Kidney (tissue), 22 donors: ENCODE measurements at regions of chr19 and their contacts with region 1.

Region 1: DNA sequence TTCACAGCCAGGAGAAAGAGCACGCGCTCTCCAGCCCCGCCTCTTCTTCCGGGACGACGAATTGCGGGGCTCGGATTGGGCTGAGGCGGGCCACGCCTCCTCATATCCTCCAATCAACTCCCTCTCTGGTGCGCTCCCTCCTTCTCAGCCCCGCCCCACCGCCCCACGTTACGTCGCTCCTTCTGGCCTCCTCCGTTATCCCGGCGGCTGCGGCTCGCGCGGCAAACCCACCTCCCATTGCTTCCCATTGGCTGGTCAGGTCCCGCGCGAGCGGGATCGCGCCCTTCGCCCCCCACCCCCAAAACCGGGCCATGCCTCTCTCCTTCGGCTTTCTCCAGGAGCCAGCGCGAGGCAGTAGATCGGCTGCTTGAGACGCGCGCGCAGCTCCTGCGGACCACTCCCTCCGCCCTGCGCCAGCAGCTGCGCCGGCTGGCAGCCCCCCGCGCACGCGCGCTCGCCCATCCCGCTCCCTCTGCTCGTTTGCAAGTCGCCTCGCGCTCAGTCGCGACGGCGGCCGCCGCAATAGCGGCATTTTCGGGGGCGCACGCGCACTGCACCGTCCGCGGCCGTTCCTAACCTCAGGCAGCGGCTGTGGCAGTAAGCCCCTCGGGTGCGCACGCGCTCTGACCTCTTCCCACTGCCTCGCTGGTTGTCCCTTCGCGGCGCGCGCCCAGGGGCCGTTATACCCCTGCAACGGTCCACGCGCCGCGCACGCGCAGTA is 512 bp upstream of the ARHGAP35 start:
- DNase-seq: peak; percentile 99
- H3K4me3 ChIP-seq: peak overlapping the region; percentile 63 to 75 (median 64)
- H3K27ac ChIP-seq: peak overlapping the region; percentile 93 to 96
- H3K4me1 ChIP-seq: peaks cover 6 to 24% (median 20%) of the 10 kb centered on the region in 3 donors
- H3K27me3 ChIP-seq: no peaks in the 10 kb centered on the region
- CTCF ChIP-seq: no peak

Region 2: DNA sequence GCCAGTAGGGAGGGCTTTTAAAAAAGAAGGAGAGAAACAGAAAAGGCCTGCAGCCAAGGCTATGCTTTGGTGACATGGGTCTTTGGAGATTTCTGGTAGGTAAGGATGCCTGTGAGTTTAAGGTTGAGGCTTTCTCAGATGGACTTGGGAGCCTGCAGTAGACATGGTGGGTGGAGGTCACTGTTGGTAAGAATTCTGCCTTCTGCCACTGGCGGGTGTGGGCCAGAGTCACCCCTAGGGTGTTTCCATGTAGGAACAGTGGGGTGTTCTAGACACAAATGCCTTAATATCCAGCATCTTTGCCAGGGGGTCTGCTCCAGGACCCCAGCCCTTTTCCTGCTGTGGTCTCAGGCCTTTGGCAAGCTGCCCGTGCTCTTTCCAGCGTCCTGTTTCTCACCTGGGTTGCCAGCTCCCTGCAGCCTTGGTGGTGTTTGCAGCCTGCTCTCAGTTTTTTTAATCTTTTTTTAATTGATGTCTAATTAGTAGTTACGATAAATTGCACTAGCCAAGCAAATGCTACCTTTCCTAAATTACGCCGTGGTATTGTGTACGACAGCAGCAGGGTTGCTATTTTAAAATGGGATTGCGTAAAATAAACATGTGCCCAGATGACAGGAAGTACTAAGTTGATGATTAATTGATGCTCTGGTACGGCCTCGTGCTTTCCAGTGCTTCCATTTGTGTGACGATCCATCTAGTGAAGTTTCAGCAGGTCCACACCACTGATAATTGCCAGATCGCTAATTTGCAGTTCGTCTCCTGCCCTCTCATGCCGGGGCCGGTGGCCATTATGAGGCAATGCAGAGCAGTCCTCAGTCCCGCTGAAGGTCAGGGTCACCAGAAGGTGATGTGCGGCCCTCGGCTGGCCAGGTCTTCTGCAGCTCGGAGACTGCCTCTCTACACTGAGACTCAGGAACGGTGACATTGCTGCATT is 124.1 kb after region 1 on chr19:
- intact Hi-C with region 1: loop called (anchors 5 kb)
- DNase-seq: peak in 3 of 5 donors; percentile 37 to 43 (median 39)
- H3K4me3 ChIP-seq: no peak overlapping the region
- H3K27ac ChIP-seq: peak overlapping the region; percentile 52 to 74
- H3K4me1 ChIP-seq: peaks cover 0 to 38% (median 24%) of the 10 kb centered on the region in 3 donors
- H3K27me3 ChIP-seq: no peaks in the 10 kb centered on the region
- CTCF ChIP-seq: no peak

Region 3: GRCh38 chr19:46995492-46995891 is 135.2 kb after region 1 on chr19:
- intact Hi-C with region 1: no loop called
- DNase-seq: no peak
- H3K4me3 ChIP-seq: no peak overlapping the region
- H3K27ac ChIP-seq: no peak overlapping the region
- H3K4me1 ChIP-seq: peaks cover 0 to 18% (median 13%) of the 10 kb centered on the region in 3 donors
- H3K27me3 ChIP-seq: no peaks in the 10 kb centered on the region
- CTCF ChIP-seq: no peak